ENCODE measurements at regions of chr7 and their contacts with region 1.

Region 1: GRCh38 chr7:116236020-116236630 is 25.8 kb downstream of the TES start:
- DNase-seq: peak; percentile 84
- H3K4me3 Mint-ChIP-seq: no peak overlapping the region
- H3K27ac Mint-ChIP-seq: no peak overlapping the region
- H3K4me1 Mint-ChIP-seq: peaks cover 26% of the 10 kb centered on the region
- H3K27me3 Mint-ChIP-seq: no peaks in the 10 kb centered on the region

Region 2: DNA sequence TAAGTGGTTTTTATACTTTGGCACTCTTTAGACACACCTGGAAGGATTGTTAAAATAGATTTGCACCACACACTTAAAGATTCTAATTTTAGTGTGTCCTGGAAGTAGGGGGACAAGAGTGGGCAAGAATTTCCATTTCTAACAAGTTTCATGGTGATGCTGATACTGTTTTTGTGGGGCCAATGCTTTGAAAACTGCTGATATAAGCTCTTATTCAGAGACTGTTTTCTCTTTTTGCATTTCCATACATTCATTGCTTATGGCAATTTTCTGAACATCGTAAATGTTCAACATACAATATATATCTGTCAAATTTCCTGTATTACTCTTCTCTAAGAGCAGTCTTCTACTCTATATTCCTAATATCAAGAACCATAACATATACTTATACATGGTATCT is 284.6 kb before region 1 on chr7:
- intact Hi-C with region 1: no loop called
- DNase-seq: no peak
- H3K4me3 Mint-ChIP-seq: no peak overlapping the region
- H3K27ac Mint-ChIP-seq: no peak overlapping the region
- H3K4me1 Mint-ChIP-seq: no peaks in the 10 kb centered on the region
- H3K27me3 Mint-ChIP-seq: no peaks in the 10 kb centered on the region

Region 3: DNA sequence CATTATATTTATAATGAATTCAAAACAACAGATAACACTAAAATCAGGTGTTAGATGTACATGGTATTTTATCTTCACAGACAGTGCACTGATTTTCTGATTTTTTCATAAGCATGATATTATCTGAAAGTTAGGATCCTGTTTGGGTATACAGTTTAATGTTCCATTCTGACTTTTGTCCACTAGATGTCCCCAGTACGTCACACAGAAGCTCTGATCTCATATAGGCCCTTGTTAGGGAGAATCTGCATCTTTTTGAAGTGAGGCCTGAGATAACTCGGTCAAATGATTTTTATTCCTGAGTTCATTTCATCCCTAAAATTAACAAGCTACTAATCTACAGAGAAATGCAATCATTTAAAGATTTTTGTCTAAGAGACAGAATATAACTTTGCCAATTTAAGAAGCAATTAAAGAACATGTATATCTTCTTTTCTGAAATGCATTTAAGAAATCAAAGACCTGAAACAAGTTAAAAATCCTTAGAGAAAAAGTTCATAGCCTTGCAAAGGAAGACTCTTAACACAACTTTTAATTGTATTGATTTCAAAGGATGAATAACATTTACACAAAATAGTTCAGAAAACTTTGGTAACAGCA is 97.8 kb before region 1 on chr7:
- intact Hi-C with region 1: loop called (anchors 1 kb)
- DNase-seq: peak; percentile 80
- H3K4me3 Mint-ChIP-seq: no peak overlapping the region
- H3K27ac Mint-ChIP-seq: no peak overlapping the region
- H3K4me1 Mint-ChIP-seq: peaks cover 11% of the 10 kb centered on the region
- H3K27me3 Mint-ChIP-seq: peaks cover 16% of the 10 kb centered on the region

Region 4: DNA sequence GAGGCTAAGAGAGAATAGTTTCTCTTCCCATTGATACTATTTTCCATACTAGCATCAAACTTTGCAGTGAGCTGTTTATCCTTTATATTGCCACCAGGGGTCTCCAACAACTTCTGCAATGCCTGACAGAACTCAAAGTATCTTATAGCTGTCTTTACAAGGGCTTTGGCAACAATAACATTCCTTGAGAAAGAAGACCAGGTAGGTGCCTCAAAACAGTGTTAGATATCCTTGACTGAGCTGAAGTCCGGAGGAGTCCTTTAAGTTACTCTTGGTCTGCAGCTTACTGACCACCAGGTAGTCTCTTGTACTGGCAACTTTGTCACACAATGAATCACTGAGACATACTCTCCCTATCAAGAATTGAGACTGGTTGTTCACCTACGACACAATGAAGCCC is 55.8 kb before region 1 on chr7:
- intact Hi-C with region 1: loop called (anchors 1 kb)
- DNase-seq: peak; percentile 77
- H3K4me3 Mint-ChIP-seq: no peak overlapping the region
- H3K27ac Mint-ChIP-seq: no peak overlapping the region
- H3K4me1 Mint-ChIP-seq: no peaks in the 10 kb centered on the region
- H3K27me3 Mint-ChIP-seq: peaks cover 15% of the 10 kb centered on the region

Region 5: DNA sequence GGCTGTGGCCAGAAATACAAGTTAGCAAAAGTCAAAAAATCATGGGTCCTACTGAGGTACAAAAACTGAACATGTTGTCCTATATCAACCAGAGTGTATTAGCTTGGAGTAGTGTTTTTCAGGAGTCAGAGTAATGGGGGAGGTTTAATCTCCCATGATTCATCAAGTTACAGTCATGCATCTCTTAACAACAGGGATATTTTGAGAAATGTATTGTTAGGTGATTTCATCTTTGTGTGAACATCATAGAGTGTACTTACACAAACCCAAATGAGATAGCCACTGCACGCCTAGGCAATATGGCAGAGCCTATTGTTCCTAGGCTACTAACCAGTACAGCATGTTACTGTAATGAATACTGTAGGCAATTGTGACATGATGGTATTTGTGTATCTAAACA is 40.7 kb before region 1 on chr7:
- intact Hi-C with region 1: loop called (anchors 5 kb)
- DNase-seq: no peak
- H3K4me3 Mint-ChIP-seq: no peak overlapping the region
- H3K27ac Mint-ChIP-seq: no peak overlapping the region
- H3K4me1 Mint-ChIP-seq: no peaks in the 10 kb centered on the region
- H3K27me3 Mint-ChIP-seq: peaks cover 36% of the 10 kb centered on the region

Region 6: GRCh38 chr7:116224492-116225098 is 11.5 kb before region 1 on chr7:
- intact Hi-C with region 1: loop called (anchors 1 kb)
- DNase-seq: no peak
- H3K4me3 Mint-ChIP-seq: peak overlapping the region; percentile 65
- H3K27ac Mint-ChIP-seq: peak overlapping the region; percentile 51
- H3K4me1 Mint-ChIP-seq: peaks cover 41% of the 10 kb centered on the region
- H3K27me3 Mint-ChIP-seq: no peaks in the 10 kb centered on the region

Region 7: GRCh38 chr7:117119192-117119924 is 883.2 kb after region 1 on chr7:
- intact Hi-C with region 1: no loop called
- DNase-seq: peak; percentile 90
- H3K4me3 Mint-ChIP-seq: no peak overlapping the region
- H3K27ac Mint-ChIP-seq: no peak overlapping the region
- H3K4me1 Mint-ChIP-seq: no peaks in the 10 kb centered on the region
- H3K27me3 Mint-ChIP-seq: peaks cover 26% of the 10 kb centered on the region